ENCODE measurements at regions of chr9 and their contacts with region 1.

Region 1: DNA sequence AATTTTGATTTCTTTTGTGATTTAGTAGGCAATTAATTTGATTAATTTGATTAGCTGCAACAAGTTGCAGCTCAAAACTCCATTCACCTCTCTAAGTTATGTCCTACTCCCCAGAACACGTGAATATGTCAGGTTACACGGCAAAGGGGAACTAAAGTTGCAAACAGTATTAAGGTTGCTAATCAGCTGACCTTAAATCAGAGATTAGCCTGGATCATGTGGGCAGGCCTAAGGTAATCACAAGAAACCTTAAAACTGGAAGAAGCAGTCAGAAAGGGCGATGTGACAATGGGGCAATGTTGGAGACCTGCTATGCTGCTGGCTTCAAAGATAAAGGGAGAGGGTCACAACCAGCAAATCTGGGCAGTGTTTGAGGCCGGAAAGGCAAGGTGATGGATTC is 47.3 kb upstream of the ANXA1 start:
- DNase-seq: no peak
- H3K4me3 ChIP-seq: no peak overlapping the region
- H3K27ac ChIP-seq: no peak overlapping the region
- H3K4me1 ChIP-seq: no peaks in the 10 kb centered on the region
- H3K27me3 ChIP-seq: no peaks in the 10 kb centered on the region
- CTCF ChIP-seq: no peak
- POLR2A ChIP-seq: no peak

Region 2: DNA sequence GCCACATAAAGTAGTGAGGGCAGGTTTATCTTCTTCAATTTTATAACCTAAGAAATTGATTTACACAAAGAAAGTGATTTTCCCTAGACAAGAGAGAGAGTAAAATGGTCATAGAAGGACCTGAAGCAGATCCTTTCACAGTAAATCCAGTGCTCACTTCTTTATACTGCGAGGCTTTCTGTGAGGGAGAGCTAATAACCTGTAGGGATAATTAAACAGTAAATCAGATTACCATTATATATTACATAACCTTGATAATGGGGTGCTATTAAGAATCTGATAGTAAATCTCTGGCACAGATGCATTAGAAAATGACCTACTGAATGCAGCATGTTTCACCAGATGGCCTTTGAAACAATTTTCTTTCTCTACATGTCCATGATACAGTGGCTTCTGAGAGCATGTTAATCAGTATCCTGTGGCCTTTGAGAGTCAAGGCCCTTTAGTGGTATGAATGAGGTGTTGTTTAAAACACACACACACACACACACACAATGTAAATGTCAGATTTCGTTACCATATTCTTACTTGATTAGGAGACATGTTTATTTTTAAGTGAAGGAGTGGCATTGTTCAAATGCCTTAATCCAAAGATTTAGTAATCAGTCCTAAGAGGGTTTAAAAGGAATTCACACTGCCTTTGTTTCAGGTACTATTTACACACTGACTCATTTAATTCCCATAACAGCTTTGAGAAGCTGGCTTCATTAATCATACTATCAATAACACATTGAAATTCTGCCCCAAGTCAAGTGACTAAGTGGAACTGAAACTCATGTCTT is 276.2 kb before region 1 on chr9:
- CTCF ChIA-PET with region 1: no interaction called
- POLR2A ChIA-PET with region 1: no interaction called
- dilution Hi-C with region 1: no loop called
- intact Hi-C with region 1: no loop called
- DNase-seq: peak; percentile 42
- H3K4me3 ChIP-seq: no peak overlapping the region
- H3K27ac ChIP-seq: no peak overlapping the region
- H3K4me1 ChIP-seq: peaks cover 4% of the 10 kb centered on the region
- H3K27me3 ChIP-seq: no peaks in the 10 kb centered on the region
- CTCF ChIP-seq: no peak
- POLR2A ChIP-seq: no peak

Region 3: DNA sequence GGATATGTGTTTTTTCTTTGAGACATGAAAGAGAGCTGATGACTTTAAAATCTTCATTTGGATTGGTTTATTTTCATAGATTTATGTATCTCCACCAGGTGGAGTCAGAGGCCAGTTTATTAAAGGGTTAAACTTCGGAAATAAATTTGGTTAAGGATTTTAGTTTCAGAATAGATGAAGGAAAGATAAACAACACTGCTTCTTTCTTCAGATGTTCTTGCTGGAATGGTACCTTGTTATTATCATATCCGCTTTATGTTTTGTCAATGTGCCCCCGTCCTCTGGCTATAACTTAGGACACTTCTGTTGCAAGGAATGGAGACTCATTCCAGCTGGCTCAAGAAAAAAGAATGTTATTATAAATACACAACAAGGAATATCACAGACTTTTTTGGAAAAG is 232.7 kb before region 1 on chr9:
- CTCF ChIA-PET with region 1: interaction called, 21 read pairs
- POLR2A ChIA-PET with region 1: no interaction called
- dilution Hi-C with region 1: loop called (anchors 25 kb)
- intact Hi-C with region 1: no loop called
- DNase-seq: peak; percentile 62
- H3K4me3 ChIP-seq: no peak overlapping the region
- H3K27ac ChIP-seq: peak overlapping the region; percentile 50
- H3K4me1 ChIP-seq: peaks cover 5% of the 10 kb centered on the region
- H3K27me3 ChIP-seq: no peaks in the 10 kb centered on the region
- CTCF ChIP-seq: peak; percentile 20 to 29
- POLR2A ChIP-seq: no peak

Region 4: GRCh38 chr9:73116031-73116430 is 11.7 kb after region 1 on chr9:
- CTCF ChIA-PET with region 1: interaction called, 48 read pairs
- POLR2A ChIA-PET with region 1: no interaction called
- dilution Hi-C with region 1: no loop called
- intact Hi-C with region 1: no loop called
- DNase-seq: no peak
- H3K4me3 ChIP-seq: no peak overlapping the region
- H3K27ac ChIP-seq: no peak overlapping the region
- H3K4me1 ChIP-seq: peaks cover 18% of the 10 kb centered on the region
- H3K27me3 ChIP-seq: no peaks in the 10 kb centered on the region
- CTCF ChIP-seq: no peak
- POLR2A ChIP-seq: no peak

Region 5: DNA sequence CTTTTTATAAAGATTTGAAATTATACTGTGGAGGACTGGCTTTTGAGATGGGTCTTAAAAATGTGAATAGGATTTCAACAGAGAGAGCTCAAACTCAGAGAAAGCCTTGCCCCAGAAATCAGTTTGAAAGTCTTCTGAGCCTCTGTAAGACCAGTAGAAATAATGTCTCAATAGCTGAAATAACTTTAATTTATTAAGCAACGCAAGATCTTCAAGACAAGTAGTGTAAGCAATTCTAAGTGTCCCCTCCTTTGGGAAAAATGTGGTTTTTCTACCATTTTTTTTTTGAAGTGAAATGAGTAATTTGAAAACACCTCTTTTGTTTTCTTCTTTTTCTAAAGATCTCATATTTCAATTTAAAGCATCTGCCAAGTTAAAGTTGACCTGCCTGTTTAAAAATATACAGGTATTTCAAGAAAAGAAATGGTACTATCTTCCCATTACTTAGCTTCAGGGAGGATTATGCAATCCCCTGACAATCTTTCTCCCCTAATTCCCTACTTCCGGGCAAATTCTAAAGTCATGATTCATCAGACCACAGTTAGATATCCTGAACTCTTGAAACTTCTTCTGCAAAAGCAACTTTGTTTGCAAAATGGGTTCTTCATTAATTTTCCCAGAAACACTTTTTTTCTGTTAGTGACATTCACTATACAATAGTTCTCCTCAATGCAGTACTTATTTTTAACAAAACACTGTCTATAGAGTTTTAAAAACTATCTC is 39.4 kb after region 1 on chr9:
- CTCF ChIA-PET with region 1: interaction called, 14 read pairs
- POLR2A ChIA-PET with region 1: no interaction called
- dilution Hi-C with region 1: no loop called
- intact Hi-C with region 1: no loop called
- DNase-seq: peak; percentile 70
- H3K4me3 ChIP-seq: no peak overlapping the region
- H3K27ac ChIP-seq: peak overlapping the region; percentile 71
- H3K4me1 ChIP-seq: peaks cover 26% of the 10 kb centered on the region
- H3K27me3 ChIP-seq: no peaks in the 10 kb centered on the region
- CTCF ChIP-seq: no peak
- POLR2A ChIP-seq: no peak

Region 6: DNA sequence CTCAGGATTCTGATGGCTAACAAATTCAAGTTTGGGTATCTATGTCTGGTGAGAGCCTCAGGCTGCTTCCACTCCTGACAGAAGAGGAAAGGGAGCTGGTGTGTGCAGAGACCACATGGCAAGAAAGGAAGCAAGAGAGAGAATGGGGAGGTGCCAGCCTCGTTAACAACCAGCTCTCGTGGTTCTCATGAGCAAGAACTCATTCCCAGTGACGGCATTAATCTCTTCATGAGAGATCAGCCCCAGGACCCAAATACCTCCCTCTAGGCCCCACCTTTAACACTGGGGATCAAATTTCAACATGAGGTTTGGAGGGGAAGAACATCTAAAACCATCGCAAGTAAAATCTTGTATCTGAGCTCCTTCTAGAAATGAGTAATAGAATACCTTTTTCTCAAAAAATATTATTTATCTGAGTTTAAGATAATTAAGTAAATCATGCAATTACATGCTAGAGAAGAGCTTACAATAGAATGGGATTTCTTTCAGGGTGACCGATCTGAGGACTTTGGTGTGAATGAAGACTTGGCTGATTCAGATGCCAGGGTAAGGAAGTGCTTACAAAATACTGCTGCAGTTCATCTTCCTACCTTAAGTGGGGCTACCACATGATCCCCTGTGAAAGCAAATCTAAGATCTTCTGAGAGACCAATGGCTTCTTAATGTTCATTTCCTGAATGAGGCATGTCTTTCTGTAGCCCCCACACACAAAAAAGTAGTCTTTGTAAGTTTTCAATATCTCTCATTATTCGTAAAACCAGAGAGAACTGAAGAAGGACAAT is 58.8 kb after region 1 on chr9:
- CTCF ChIA-PET with region 1: interaction called, 90 read pairs
- POLR2A ChIA-PET with region 1: no interaction called
- dilution Hi-C with region 1: no loop called
- intact Hi-C with region 1: no loop called
- DNase-seq: no peak
- H3K4me3 ChIP-seq: no peak overlapping the region
- H3K27ac ChIP-seq: peak overlapping the region; percentile 4
- H3K4me1 ChIP-seq: no peaks in the 10 kb centered on the region
- H3K27me3 ChIP-seq: no peaks in the 10 kb centered on the region
- CTCF ChIP-seq: no peak
- POLR2A ChIP-seq: no peak

Region 7: DNA sequence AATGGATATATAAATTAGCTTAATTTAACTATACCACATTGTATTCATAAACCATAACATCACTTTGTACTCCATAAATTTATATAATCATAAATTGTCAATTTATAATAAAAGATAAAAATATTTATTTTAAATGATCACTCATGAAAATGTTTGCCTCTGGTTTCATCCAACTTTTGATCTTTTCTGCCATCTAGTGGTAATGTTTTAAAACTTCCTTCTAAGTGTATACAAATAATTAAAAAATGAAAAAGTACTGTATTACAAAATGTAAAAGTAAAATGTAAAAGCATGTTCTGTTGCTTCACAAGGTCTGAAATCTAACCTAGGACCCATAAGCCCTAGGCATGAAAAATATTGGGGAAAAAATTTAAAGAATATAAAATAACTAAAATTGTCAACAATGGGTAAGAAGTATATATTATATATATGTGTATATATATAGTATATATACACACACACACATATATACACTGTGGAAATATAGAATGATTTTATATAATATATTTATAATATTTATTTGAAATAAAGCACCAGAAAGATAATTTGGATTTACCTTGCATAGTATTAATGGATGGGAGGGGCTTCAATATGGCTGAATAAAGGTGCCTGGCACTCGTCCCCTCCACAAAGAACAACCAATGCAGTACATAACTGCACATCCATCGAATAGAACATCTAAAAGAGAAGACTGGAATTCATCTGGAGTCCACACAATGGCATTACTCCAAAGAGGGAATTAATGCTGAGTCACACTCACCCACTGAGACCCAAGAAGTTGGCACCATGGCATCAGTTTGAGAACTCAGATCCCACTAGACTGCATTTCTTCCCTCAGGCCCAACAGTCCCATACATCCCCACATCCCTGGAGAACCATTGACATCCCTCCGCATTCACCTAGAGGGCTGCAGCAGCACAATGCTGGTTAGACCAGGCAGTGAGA is 79.8 kb after region 1 on chr9:
- CTCF ChIA-PET with region 1: interaction called, 114 read pairs
- POLR2A ChIA-PET with region 1: no interaction called
- dilution Hi-C with region 1: no loop called
- intact Hi-C with region 1: loop called (anchors 1 kb)
- DNase-seq: peak; percentile 47
- H3K4me3 ChIP-seq: no peak overlapping the region
- H3K27ac ChIP-seq: no peak overlapping the region
- H3K4me1 ChIP-seq: no peaks in the 10 kb centered on the region
- H3K27me3 ChIP-seq: no peaks in the 10 kb centered on the region
- CTCF ChIP-seq: peak; percentile 9 to 10
- POLR2A ChIP-seq: no peak

Region 8: DNA sequence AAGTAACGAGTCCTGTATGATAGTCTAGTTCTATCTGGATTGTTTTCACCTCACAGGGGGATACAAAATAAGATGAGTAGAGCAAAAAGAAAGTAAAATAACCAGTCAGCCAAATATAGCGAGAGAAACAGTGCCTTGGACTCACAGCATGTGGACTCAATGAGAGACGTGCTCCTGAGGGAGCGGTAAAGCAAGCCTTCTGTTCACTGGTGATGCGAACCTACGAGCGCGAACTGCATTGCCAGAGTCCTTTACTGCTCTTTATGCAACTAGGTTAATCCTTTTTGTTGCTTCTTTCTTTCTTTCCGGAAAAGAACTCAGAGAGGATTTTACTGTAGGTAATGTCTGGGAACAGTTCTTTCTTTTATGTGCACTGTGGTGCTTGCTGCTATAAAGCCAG is 180.0 kb after region 1 on chr9:
- CTCF ChIA-PET with region 1: no interaction called
- POLR2A ChIA-PET with region 1: no interaction called
- dilution Hi-C with region 1: no loop called
- intact Hi-C with region 1: no loop called
- DNase-seq: no peak
- H3K4me3 ChIP-seq: no peak overlapping the region
- H3K27ac ChIP-seq: no peak overlapping the region
- H3K4me1 ChIP-seq: no peaks in the 10 kb centered on the region
- H3K27me3 ChIP-seq: no peaks in the 10 kb centered on the region
- CTCF ChIP-seq: no peak
- POLR2A ChIP-seq: no peak